ENCODE measurements at regions of chr5 and their contacts with region 1.

Region 1: GRCh38 chr5:171840066-171840465 is 54.4 kb downstream of the SMIM23 start:
- DNase-seq: no peak
- ATAC-seq: no peak
- H3K4me3 ChIP-seq: no peak overlapping the region
- H3K27ac ChIP-seq: no peak overlapping the region
- H3K4me1 ChIP-seq: peaks cover 0 to 20% (median 6%) of the 10 kb centered on the region in 9 donors
- H3K27me3 ChIP-seq: no peaks in the 10 kb centered on the region
- CTCF ChIP-seq: no peak

Region 2: DNA sequence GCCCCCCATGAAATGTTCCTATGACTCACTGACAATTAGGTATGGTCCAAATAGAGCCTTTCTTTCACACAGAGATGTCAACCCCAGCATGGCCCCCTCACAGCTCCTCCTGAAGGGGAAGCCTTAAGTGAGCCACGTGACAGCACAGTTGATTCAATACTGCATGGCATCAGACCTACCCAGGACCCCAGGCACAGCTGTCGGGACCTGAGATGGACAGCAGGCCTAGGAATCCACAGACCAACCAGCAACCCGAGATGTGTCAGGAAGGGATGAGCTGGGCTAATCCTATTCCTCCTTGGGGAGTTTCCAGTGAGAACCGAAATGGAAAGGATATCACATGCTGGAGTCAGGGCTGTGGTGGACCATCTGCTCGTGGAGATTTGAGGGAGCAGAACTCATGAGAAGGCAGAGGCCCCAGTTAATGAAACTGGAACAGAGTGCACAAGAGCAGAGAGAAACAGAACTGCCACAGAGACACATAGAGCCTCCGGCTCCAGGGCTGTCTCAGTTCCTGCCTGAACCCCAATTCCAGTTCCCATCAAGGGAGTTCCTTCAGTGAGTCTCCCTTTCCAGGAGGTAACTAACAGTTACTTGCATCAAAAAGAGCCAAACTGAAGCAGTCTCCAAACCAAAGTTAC is 96.5 kb before region 1 on chr5:
- intact Hi-C with region 1: loop called in 1 of 10 experiments (anchors 10 kb)
- DNase-seq: no peak
- ATAC-seq: no peak
- H3K4me3 ChIP-seq: no peak overlapping the region
- H3K27ac ChIP-seq: no peak overlapping the region
- H3K4me1 ChIP-seq: peaks cover 0 to 7% (median 0%) of the 10 kb centered on the region in 9 donors
- H3K27me3 ChIP-seq: no peaks in the 10 kb centered on the region
- CTCF ChIP-seq: no peak

Measured in heart right ventricle (tissue), 16 donors.